HCT116 (cell line): ENCODE measurements at regions of chr9 and their contacts with region 1.

Region 1: GRCh38 chr9:78775696-78776295 is 478.9 kb downstream of the PSAT1 start:
- DNase-seq: no peak
- ATAC-seq: no peak
- H3K4me3 ChIP-seq: no peak overlapping the region
- H3K27ac ChIP-seq: no peak overlapping the region
- H3K4me1 ChIP-seq: no peaks in the 10 kb centered on the region
- H3K27me3 ChIP-seq: no peaks in the 10 kb centered on the region
- CTCF ChIP-seq: no peak
- POLR2A ChIP-seq: no peak
- RAD21 ChIP-seq: no peak

Region 2: DNA sequence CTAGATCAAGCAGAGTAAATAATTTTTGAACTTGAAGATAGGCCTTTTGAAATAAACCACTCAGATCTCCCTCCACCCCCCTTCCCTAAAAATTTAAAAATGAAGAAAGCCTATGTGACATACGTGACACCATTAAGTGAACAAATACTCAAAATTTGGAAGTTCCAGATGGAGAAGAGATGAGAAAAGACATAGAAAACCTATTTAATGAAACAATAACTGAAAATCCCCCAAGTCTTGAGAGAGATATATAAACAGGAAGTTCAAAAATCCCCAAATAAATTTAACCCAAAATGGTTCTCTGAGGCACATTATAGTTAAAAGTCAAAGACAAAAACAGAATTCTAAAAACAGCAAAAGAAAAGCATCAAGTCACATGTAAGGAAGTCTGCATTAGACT is 50.3 kb before region 1 on chr9:
- CTCF ChIA-PET with region 1: no interaction called
- POLR2A ChIA-PET with region 1: no interaction called
- RAD21 ChIA-PET with region 1: no interaction called
- intact Hi-C with region 1: loop called (anchors 5 kb)
- DNase-seq: no peak
- ATAC-seq: no peak
- H3K4me3 ChIP-seq: no peak overlapping the region
- H3K27ac ChIP-seq: no peak overlapping the region
- H3K4me1 ChIP-seq: no peaks in the 10 kb centered on the region
- H3K27me3 ChIP-seq: no peaks in the 10 kb centered on the region
- CTCF ChIP-seq: no peak
- POLR2A ChIP-seq: no peak
- RAD21 ChIP-seq: no peak

Region 3: DNA sequence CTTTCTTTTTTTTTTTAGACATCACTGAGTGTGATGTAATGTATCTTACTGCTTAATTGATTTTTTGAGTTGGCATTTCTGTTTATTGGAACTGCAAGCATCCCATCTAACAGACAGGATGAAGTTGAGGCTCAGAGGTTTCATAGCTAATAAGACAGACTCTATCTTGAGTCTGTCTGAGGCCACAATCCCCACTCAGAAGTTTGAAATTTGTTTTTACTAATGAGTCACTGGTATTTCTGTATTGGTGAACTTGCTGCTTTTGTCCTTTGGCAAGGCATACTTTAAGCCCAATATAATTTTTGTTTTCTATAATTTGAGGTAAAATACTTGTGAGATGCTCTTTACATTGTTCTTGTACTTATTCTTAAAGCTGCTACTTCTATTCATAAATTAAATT is 12.3 kb after region 1 on chr9:
- CTCF ChIA-PET with region 1: no interaction called
- POLR2A ChIA-PET with region 1: no interaction called
- RAD21 ChIA-PET with region 1: no interaction called
- intact Hi-C with region 1: no loop called
- DNase-seq: no peak
- ATAC-seq: no peak
- H3K4me3 ChIP-seq: no peak overlapping the region
- H3K27ac ChIP-seq: no peak overlapping the region
- H3K4me1 ChIP-seq: no peaks in the 10 kb centered on the region
- H3K27me3 ChIP-seq: no peaks in the 10 kb centered on the region
- CTCF ChIP-seq: no peak
- POLR2A ChIP-seq: no peak
- RAD21 ChIP-seq: no peak